ENCODE measurements at regions of chr2 and their contacts with region 1.

Region 1: DNA sequence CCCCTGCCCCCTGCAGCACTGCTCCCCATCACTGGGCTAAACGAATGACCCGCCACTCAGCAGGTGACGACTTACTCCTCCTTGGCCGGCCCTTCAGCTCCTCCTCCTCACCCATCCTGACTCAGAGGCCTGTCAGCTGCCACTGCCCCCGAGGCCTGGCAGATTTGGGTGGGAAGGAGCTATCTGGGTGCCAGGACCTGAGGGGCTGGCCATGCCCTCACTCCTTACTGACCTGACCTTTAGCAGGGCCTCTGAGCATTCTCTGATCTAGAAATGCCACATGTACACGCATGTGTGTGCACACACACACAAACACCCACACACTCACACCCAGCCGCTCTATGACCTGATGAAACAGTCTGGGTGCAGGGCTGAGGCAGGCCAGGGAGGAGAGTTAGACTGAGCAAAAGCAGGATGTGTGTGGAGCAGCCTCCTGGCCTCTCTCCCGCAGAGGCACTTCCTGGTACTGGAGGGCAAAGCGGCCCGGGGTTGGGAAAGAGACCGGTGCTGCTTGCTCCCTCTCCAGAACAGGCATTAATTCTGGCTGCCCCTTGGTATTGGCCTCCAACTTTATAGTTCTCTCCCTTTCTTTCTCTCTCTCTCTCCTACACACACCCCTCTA is 68.0 kb downstream of the ZFP36L2 start:
- DNase-seq: peak in 2 of 5 donors; percentile 43 to 72
- H3K4me3 ChIP-seq: peak overlapping the region; percentile 7
- H3K4me3 Mint-ChIP-seq: peak overlapping the region; percentile 59 to 86 (median 74)
- H3K27ac ChIP-seq: peak overlapping the region; percentile 66
- H3K27ac Mint-ChIP-seq: peak overlapping the region; percentile 92 to 99 (median 97)
- H3K4me1 ChIP-seq: peaks cover 78% of the 10 kb centered on the region
- H3K4me1 Mint-ChIP-seq: peaks cover 64 to 94% (median 71%) of the 10 kb centered on the region in 3 donors
- H3K27me3 ChIP-seq: no peaks in the 10 kb centered on the region
- H3K27me3 Mint-ChIP-seq: peaks cover 0 to 1% of the 10 kb centered on the region in 2 donors

Region 2: DNA sequence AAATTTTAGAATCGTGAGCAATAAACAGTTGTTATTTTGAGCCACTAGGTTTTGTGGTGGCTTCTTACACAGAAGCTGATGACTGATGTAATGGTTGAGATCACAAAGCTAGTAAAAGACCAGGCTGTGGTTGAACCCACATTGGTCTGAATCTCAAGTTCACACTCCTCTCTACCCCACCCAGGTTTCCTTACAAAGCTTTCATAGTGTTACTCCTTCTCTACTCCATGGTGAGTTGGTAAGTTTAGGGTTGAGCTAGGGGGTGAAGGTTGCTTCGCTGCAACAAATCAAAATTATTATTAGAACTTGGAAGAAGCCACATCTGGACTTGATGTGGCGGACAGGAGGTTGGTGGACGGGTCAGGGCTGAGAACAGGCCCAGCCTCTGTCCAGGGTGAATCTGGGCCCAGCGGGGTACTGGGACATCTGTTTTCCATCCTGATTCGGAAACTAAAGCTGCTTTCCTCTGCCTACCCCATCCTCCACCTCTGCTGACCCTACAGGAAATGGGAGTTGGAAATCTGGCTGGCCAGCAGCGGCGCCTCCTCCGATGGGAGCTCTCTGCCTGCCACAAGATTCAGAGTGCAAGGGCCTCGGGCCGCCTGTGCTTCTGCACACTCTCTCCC is 18.3 kb before region 1 on chr2:
- CTCF ChIA-PET with region 1: interaction called, 351 read pairs
- POLR2A ChIA-PET with region 1: interaction called, 15 read pairs
- DNase-seq: peak in 3 of 5 donors; percentile 64 to 74 (median 71)
- H3K4me3 ChIP-seq: peak overlapping the region; percentile 19
- H3K4me3 Mint-ChIP-seq: peak overlapping the region; percentile 46 to 89 (median 69)
- H3K27ac ChIP-seq: peak overlapping the region; percentile 58
- H3K27ac Mint-ChIP-seq: peak overlapping the region; percentile 89 to 99 (median 98)
- H3K4me1 ChIP-seq: peaks cover 93% of the 10 kb centered on the region
- H3K4me1 Mint-ChIP-seq: peaks cover 61 to 80% (median 79%) of the 10 kb centered on the region in 3 donors
- H3K27me3 ChIP-seq: no peaks in the 10 kb centered on the region
- H3K27me3 Mint-ChIP-seq: peaks cover 0 to 4% of the 10 kb centered on the region in 2 donors